Mammary epithelial cell (primary cell): ENCODE measurements at regions of chr5 and their contacts with region 1.

Region 1: DNA sequence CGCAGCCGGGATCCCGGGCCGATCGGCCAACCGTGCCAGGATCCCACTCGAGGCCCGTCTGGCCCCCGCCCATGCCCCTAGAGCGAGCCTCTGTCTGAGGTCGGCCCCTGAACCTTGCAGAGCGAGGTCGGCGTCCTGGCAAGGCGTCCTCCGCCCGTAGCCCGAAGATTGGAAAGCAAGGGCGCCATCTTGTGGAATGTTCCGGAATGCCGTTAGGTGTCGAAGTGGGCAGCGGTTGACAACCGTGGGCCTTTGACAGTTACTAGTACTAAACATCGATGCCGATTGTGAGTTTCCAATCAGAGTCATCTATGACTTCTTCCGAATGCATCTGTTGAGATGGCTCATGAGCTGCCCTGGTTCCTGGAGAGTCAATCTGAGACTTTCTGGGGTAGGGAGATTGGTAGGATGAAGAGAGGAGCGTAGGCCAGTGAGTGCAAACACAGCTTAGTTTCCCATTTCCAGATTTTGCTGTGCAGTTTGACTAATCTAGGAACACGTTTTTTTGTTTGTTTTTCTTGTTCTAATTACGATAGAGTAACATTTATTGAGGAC is 923 bp upstream of the PLK2 start:
- DNase-seq: peak; percentile 85
- H3K4me3 ChIP-seq: peak overlapping the region; percentile 94 to 99 (median 98)
- H3K27ac ChIP-seq: peak overlapping the region; percentile 96
- H3K4me1 ChIP-seq: peaks cover 25% of the 10 kb centered on the region
- H3K27me3 ChIP-seq: no peaks in the 10 kb centered on the region
- CTCF ChIP-seq: peak; percentile 72 to 84

Region 2: DNA sequence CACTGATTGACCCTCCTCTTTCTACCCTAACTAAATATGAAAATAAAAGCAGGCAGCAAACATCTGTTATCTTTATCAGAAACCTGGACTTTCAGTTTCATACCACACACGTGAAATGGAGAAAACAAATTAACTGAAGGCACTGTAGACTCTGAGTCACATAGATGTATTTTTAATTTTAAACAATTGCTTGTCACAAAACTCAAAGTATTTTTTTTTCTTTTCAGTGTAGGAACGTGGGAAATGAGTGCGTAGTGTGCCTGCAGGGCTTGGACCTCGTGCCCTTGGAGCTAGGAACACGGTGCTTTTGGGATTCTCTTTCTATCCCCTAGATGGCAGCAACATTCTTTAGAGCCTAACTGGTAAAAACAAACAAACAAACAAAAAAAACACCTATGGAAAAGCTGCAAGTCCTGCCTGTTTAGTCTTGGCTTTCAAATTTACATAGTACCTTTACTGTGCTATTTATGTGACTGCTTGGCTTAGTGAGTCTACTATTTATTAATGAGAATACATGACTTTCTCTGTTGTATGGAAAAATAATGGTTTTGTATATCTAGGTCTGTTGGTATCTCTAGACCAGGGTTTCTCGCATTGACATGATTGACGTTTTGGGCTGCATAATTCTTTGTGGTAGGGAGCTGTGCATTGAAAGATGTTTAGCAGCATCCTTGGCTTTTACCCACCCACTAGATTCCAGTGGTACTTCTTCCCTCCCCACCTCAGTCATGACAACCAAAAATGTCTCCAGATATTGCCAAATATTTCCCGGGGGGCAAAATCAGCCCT is 961.4 kb before region 1 on chr5:
- CTCF ChIA-PET with region 1: interaction called, 4 read pairs
- dilution Hi-C with region 1: loop called (anchors 5 kb)
- in situ Hi-C with region 1: loop called (anchors 10 kb)
- intact Hi-C with region 1: loop called (anchors 1 kb)
- DNase-seq: peak; percentile 63
- H3K4me3 ChIP-seq: peak overlapping the region in 2 of 3 experiments; percentile 36 to 39
- H3K27ac ChIP-seq: no peak overlapping the region
- H3K4me1 ChIP-seq: peaks cover 24% of the 10 kb centered on the region
- H3K27me3 ChIP-seq: no peaks in the 10 kb centered on the region
- CTCF ChIP-seq: peak; percentile 87 to 89

Region 3: GRCh38 chr5:57816108-57816507 is 644.7 kb before region 1 on chr5:
- CTCF ChIA-PET with region 1: no interaction called
- dilution Hi-C with region 1: loop called (anchors 25 kb)
- in situ Hi-C with region 1: no loop called
- intact Hi-C with region 1: loop called (anchors 1 kb)
- DNase-seq: peak; percentile 97
- H3K4me3 ChIP-seq: no peak overlapping the region
- H3K27ac ChIP-seq: peak overlapping the region; percentile 86
- H3K4me1 ChIP-seq: peaks cover 24% of the 10 kb centered on the region
- H3K27me3 ChIP-seq: no peaks in the 10 kb centered on the region
- CTCF ChIP-seq: no peak

Region 4: DNA sequence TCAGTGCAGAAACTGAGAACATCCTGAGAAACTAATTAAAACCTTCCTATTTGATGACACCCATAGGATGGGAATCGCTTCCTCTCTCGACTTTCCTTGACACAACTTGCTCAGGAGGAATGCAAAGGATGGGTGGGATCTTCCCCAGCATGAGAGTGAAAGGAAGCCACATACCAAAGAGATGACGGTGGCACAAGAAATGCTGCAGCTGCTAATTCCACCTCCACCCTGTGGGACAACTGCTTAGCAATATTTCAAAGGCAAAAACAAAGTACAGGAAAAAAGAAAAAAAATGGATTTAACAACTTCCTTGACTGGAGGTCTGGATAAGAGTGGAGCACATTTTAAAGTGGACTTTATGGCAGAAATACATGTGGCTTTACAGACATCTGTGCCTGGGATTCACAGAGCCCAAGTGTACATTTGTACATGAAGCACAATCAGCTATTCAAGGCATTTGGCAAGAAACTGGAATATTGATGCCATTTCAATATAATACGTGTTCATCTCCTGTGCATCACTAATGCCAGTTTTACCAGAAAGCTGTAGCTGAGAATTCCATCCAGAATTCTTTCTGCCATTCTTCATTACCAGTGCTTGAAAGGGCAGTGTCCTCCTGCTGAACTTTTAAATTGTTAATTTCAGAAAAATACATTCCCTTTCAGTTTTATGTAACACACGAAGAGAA is 619.0 kb before region 1 on chr5:
- CTCF ChIA-PET with region 1: interaction called, 9 read pairs
- dilution Hi-C with region 1: no loop called
- in situ Hi-C with region 1: no loop called
- intact Hi-C with region 1: loop called (anchors 1 kb)
- DNase-seq: peak; percentile 99
- H3K4me3 ChIP-seq: no peak overlapping the region
- H3K27ac ChIP-seq: peak overlapping the region; percentile 99
- H3K4me1 ChIP-seq: peaks cover 60% of the 10 kb centered on the region
- H3K27me3 ChIP-seq: no peaks in the 10 kb centered on the region
- CTCF ChIP-seq: no peak

Region 5: GRCh38 chr5:58094031-58094430 is 366.8 kb before region 1 on chr5:
- CTCF ChIA-PET with region 1: no interaction called
- dilution Hi-C with region 1: no loop called
- in situ Hi-C with region 1: no loop called
- intact Hi-C with region 1: loop called (anchors 5 kb)
- DNase-seq: peak; percentile 94
- H3K4me3 ChIP-seq: no peak overlapping the region
- H3K27ac ChIP-seq: no peak overlapping the region
- H3K4me1 ChIP-seq: peaks cover 23% of the 10 kb centered on the region
- H3K27me3 ChIP-seq: no peaks in the 10 kb centered on the region
- CTCF ChIP-seq: no peak

Region 6: GRCh38 chr5:58294598-58295305 is 166.1 kb before region 1 on chr5:
- CTCF ChIA-PET with region 1: no interaction called
- dilution Hi-C with region 1: no loop called
- in situ Hi-C with region 1: no loop called
- intact Hi-C with region 1: no loop called
- DNase-seq: peak; percentile 79
- H3K4me3 ChIP-seq: no peak overlapping the region
- H3K27ac ChIP-seq: peak overlapping the region; percentile 43
- H3K4me1 ChIP-seq: peaks cover 14% of the 10 kb centered on the region
- H3K27me3 ChIP-seq: no peaks in the 10 kb centered on the region
- CTCF ChIP-seq: no peak

Region 7: DNA sequence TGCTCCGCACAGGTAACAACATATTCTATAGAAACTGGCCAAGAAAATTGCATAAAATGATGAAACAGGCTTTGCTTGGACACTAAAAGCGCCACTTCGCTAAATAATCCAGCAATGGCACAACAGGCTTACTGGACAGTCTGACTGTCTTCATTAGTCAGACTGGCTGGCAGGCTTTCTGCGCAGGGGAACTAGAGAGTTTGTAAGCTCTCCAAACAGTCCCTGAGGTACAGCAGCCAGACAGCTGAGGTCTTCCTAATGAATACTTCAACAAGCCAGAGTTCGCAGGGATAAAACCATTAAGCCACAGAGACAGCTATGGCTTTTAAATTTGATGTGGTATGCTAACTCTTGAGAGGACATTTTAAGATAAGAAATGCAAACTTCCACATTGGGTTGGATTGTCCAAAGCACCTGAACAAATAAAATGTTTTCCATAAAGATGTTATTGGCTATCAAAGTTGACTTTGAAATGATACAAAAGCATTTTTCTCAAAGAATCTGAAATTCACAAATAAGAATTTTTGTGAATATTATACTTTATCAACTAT is 21.6 kb before region 1 on chr5:
- CTCF ChIA-PET with region 1: no interaction called
- dilution Hi-C with region 1: no loop called
- in situ Hi-C with region 1: no loop called
- intact Hi-C with region 1: no loop called
- DNase-seq: no peak
- H3K4me3 ChIP-seq: no peak overlapping the region
- H3K27ac ChIP-seq: no peak overlapping the region
- H3K4me1 ChIP-seq: no peaks in the 10 kb centered on the region
- H3K27me3 ChIP-seq: no peaks in the 10 kb centered on the region
- CTCF ChIP-seq: no peak

Region 8: GRCh38 chr5:58507715-58508114 is 46.9 kb after region 1 on chr5:
- CTCF ChIA-PET with region 1: no interaction called
- dilution Hi-C with region 1: no loop called
- in situ Hi-C with region 1: no loop called
- intact Hi-C with region 1: no loop called
- DNase-seq: no peak
- H3K4me3 ChIP-seq: no peak overlapping the region
- H3K27ac ChIP-seq: no peak overlapping the region
- H3K4me1 ChIP-seq: no peaks in the 10 kb centered on the region
- H3K27me3 ChIP-seq: peaks cover 5% of the 10 kb centered on the region
- CTCF ChIP-seq: no peak